Left colon (tissue), 2 donors: ENCODE measurements at regions of chr11 and their contacts with region 1.

Region 1: GRCh38 chr11:5684646-5685362 is at the start of gene TRIM5:
- DNase-seq: peak; percentile 83 to 88
- ATAC-seq: peak; percentile 96
- total RNA-seq, gene TRIM5: 17.6 TPM

Region 2: GRCh38 chr11:5210376-5210885 is 474.4 kb before region 1 on chr11:
- intact Hi-C with region 1: no loop called
- DNase-seq: no peak
- ATAC-seq: no peak

Region 3: GRCh38 chr11:5596607-5597201 is 88.1 kb before region 1 on chr11 and contains the start of gene TRIM6:
- intact Hi-C with region 1: loop called in 1 of 2 experiments (anchors 10 kb)
- DNase-seq: peak; percentile 46 to 58
- ATAC-seq: peak; percentile 82
- total RNA-seq, gene TRIM6: 0.40 to 1.7 TPM